Endothelial cell of umbilical vein (primary cell): ENCODE measurements at regions of chr4 and their contacts with region 1.

Region 1: GRCh38 chr4:14184265-14184664 is 556.7 kb upstream of the BOD1L1 start:
- DNase-seq: peak; percentile 49
- H3K4me3 ChIP-seq: no peak overlapping the region
- H3K27ac ChIP-seq: no peak overlapping the region
- H3K4me1 ChIP-seq: peaks cover 25% of the 10 kb centered on the region
- H3K27me3 ChIP-seq: peaks cover 0 to 2% of the 10 kb centered on the region in 2 experiments
- CTCF ChIP-seq: no peak
- POLR2A ChIP-seq: no peak

Region 2: DNA sequence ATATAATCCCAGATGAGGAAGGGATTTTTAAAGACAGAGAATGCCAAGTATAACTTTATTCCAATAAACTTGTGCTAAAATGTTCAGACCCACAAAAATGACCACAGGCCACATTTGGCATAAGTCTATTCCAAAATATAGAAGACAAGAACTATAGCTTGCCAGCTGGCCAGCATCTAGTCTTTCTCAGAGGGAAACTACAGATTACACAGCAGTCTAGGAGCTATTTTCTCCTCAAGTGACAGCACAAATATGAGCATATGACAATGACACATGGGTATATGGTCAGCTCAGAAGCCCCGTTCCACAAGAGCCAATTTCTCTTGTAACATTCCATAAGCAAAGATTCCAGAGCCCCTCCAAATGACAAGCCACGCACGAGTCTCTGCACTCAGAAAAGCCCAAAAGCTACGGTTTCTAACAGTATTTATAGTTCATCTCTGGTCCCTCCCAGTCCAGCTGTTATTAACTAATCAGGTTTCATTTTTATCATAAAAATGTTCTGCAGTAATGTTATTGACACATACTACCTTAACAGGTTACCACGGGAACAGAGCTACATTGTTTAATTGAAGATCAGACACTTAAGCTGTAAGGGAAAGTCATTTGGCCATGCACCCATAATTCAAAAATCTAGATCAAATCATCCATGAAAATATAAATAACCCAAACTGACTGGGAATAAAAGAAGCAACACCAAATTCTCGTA is 770.4 kb before region 1 on chr4:
- CTCF ChIA-PET with region 1: no interaction called
- POLR2A ChIA-PET with region 1: no interaction called
- dilution Hi-C with region 1: no loop called
- intact Hi-C with region 1: no loop called
- DNase-seq: no peak
- H3K4me3 ChIP-seq: no peak overlapping the region
- H3K27ac ChIP-seq: no peak overlapping the region
- H3K4me1 ChIP-seq: peaks cover 3% of the 10 kb centered on the region
- H3K27me3 ChIP-seq: no peaks in the 10 kb centered on the region
- CTCF ChIP-seq: no peak
- POLR2A ChIP-seq: no peak

Region 3: DNA sequence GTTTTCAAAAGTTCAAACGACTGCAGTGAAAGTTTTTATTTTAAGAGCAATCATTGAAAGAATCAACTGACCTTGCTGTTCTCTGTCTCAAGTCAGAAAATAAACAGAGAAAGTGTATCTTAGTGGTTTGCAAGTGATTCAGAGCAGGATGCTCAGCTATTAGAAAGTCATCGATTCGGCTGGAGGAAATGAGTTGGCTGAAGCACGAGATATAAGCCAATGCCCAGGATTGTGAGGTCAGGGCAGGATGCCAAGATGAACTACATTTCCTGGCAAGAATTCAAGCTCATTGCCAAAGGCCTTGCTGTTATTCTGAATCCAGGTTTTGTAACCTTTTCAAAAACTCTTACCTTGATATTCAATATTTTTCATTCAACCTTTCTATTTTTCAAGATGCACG is 15.3 kb before region 1 on chr4:
- CTCF ChIA-PET with region 1: interaction called, 7 read pairs
- POLR2A ChIA-PET with region 1: interaction called, 3 read pairs
- dilution Hi-C with region 1: no loop called
- intact Hi-C with region 1: loop called (anchors 2 kb)
- DNase-seq: peak; percentile 93
- H3K4me3 ChIP-seq: no peak overlapping the region
- H3K27ac ChIP-seq: no peak overlapping the region
- H3K4me1 ChIP-seq: peaks cover 19% of the 10 kb centered on the region
- H3K27me3 ChIP-seq: no peaks in the 10 kb centered on the region
- CTCF ChIP-seq: no peak
- POLR2A ChIP-seq: peak; percentile 34